ENCODE measurements at regions of chr1 and their contacts with region 1.

Region 1: GRCh38 chr1:93437976-93438605 is 9.8 kb upstream of the FNBP1L start:
- DNase-seq: peak; percentile 49
- ATAC-seq: no peak
- H3K4me3 ChIP-seq: no peak overlapping the region
- H3K27ac ChIP-seq: no peak overlapping the region
- H3K4me1 ChIP-seq: peaks cover 27% of the 10 kb centered on the region
- H3K27me3 ChIP-seq: no peaks in the 10 kb centered on the region; a peak in 1 of 5 replicates
- CTCF ChIP-seq: peak; percentile 70
- EP300 ChIP-seq: no peak
- POLR2A ChIP-seq: no peak
- RAD21 ChIP-seq: peak; percentile 36; the same call in 1 of the 2 replicates

Region 2: DNA sequence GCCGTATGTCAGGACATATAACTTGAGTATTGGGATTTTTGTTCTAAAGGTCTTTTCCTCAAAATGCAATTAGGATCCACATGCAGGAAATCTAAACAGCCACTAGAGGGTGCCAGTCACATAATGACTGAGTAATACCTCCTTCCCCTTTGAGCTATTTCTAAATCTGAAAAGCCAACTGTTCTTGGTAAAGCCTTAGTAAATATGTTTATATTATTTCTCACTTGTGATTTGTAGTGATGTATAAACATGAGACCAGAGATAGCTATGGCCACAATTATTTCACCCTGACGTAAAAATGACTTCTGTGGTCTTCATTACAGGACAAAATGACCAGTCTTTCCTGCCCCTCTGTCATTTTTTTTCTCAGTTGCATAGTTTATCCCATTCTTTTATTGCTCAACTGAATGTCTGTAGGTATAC is 133.4 kb before region 1 on chr1:
- CTCF ChIA-PET with region 1: interaction called, 3 read pairs
- POLR2A ChIA-PET with region 1: no interaction called
- in situ Hi-C with region 1: no loop called
- intact Hi-C with region 1: loop called (anchors 5 kb)
- DNase-seq: peak; percentile 65
- ATAC-seq: no peak
- H3K4me3 ChIP-seq: no peak overlapping the region
- H3K27ac ChIP-seq: no peak overlapping the region
- H3K4me1 ChIP-seq: no peaks in the 10 kb centered on the region
- H3K27me3 ChIP-seq: no peaks in the 10 kb centered on the region
- CTCF ChIP-seq: peak; percentile 83
- EP300 ChIP-seq: no peak
- POLR2A ChIP-seq: no peak
- RAD21 ChIP-seq: peak; percentile 85

Region 3: GRCh38 chr1:93629099-93630059 is 191.3 kb after region 1 on chr1:
- CTCF ChIA-PET with region 1: no interaction called
- POLR2A ChIA-PET with region 1: no interaction called
- in situ Hi-C with region 1: no loop called
- intact Hi-C with region 1: loop called (anchors 1 kb)
- DNase-seq: peak; percentile 65
- ATAC-seq: peak; percentile 71
- H3K4me3 ChIP-seq: no peak overlapping the region
- H3K27ac ChIP-seq: no peak overlapping the region
- H3K4me1 ChIP-seq: peaks cover 26% of the 10 kb centered on the region
- H3K27me3 ChIP-seq: no peaks in the 10 kb centered on the region
- CTCF ChIP-seq: peak; percentile 84
- EP300 ChIP-seq: no peak
- POLR2A ChIP-seq: no peak
- RAD21 ChIP-seq: peak; percentile 89

Region 4: DNA sequence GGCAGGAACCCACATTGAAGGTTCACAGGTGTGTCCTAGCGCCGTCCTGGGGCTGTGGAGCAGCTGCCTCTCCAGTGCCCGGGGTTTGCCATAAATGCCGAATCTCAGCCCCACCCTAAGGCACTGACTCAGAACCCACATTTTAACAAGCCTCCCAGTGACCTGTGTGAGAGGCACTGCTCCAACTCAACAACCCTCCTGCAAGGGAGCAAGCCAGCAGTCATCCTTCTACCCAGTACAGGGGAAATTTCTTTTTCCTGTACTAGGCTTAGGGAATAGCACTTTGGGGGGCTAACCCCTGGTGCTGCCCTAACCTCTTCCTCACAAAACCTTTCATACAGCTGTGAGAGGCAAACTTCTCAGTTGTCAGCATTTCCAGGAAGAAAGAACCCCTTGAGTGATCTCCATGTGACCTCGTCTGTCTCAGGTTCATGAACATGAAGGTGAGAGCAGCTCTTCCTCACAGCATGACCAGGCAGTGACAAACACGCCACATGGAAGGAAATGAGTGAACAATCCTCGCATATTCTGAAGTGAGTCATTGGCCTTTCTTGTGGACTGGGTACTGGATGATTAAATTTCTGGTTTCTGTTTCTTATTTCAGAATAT is 255.0 kb after region 1 on chr1:
- CTCF ChIA-PET with region 1: no interaction called
- POLR2A ChIA-PET with region 1: no interaction called
- in situ Hi-C with region 1: no loop called
- intact Hi-C with region 1: no loop called
- DNase-seq: peak; percentile 27
- ATAC-seq: no peak
- H3K4me3 ChIP-seq: no peak overlapping the region
- H3K27ac ChIP-seq: no peak overlapping the region
- H3K4me1 ChIP-seq: peaks cover 44% of the 10 kb centered on the region
- H3K27me3 ChIP-seq: peaks cover 2 to 3% of the 10 kb centered on the region in 2 experiments; a peak in 2 of 5 replicates
- CTCF ChIP-seq: no peak
- EP300 ChIP-seq: no peak
- POLR2A ChIP-seq: no peak
- RAD21 ChIP-seq: no peak

Region 5: GRCh38 chr1:93827633-93828366 is 389.7 kb after region 1 on chr1:
- CTCF ChIA-PET with region 1: no interaction called
- POLR2A ChIA-PET with region 1: no interaction called
- in situ Hi-C with region 1: loop called (anchors 10 kb)
- intact Hi-C with region 1: no loop called
- DNase-seq: peak; percentile 94
- ATAC-seq: peak; percentile 98
- H3K4me3 ChIP-seq: peak overlapping the region in 1 of 3 experiments; percentile 1; a peak in 1 of 6 replicates
- H3K27ac ChIP-seq: peak overlapping the region; percentile 73
- H3K4me1 ChIP-seq: peaks cover 29% of the 10 kb centered on the region
- H3K27me3 ChIP-seq: no peaks in the 10 kb centered on the region
- CTCF ChIP-seq: 0 out of 2 replicates have a peak, but pooled peaks have one; percentile 9
- EP300 ChIP-seq: peak; percentile 77 to 89; a peak in 3 of 4 replicates
- POLR2A ChIP-seq: no peak
- RAD21 ChIP-seq: peak; percentile 40